ENCODE measurements at regions of chr6 and their contacts with region 1.

Region 1: DNA sequence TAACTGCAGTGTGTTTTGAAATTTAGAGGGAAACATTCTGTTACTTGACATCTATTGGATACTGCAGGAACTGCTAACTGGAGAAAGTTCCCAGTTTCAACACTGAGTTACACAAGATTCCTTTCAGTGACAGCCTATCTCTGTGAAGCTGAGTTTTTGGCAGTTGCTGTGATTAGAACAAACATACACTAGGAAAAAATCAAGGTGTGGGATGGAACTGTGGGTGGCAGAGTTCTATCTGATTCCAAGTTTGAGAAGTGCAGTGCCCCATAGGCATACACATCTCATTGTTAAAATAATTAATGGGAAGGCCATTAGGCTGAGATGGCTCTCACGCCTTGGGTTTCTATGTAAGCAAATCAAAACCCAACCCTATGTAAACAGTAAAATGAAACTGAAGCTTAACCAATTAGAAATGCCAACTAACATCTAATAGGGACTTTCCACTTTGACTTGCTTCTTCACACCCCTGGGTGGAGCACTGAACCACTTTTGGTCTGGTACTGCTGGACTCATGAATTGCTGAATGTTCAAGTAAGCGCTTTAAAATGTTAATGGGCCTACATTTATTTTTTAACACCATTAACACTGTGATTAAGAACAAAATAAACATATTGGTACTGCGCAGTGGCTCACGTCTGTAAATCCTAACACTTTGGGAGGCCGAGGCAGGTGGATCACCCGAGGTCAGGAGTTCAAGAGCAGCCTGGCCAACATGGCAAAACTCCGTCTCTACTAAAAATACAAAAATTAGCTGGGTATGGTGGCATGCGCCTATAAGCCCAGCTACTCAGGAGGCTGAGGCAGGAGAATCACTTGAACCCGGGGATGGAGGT is 55.2 kb upstream of the TBC1D7 start:
- DNase-seq: peak; percentile 55
- H3K4me3 Mint-ChIP-seq: peak overlapping the region; percentile 32
- H3K27ac Mint-ChIP-seq: peak overlapping the region; percentile 59
- H3K4me1 Mint-ChIP-seq: peaks cover 10% of the 10 kb centered on the region
- H3K27me3 Mint-ChIP-seq: no peaks in the 10 kb centered on the region
- CTCF ChIP-seq: peak; percentile 23

Region 2: GRCh38 chr6:13336553-13336952 is 47.0 kb before region 1 on chr6:
- CTCF ChIA-PET with region 1: interaction called, 3 read pairs
- POLR2A ChIA-PET with region 1: interaction called, 3 read pairs
- intact Hi-C with region 1: loop called (anchors 2 kb)
- DNase-seq: peak; percentile 81
- H3K4me3 Mint-ChIP-seq: no peak overlapping the region
- H3K27ac Mint-ChIP-seq: no peak overlapping the region
- H3K4me1 Mint-ChIP-seq: peaks cover 5% of the 10 kb centered on the region
- H3K27me3 Mint-ChIP-seq: no peaks in the 10 kb centered on the region
- CTCF ChIP-seq: peak; percentile 90

Region 3: GRCh38 chr6:13591205-13591921 is 207.8 kb after region 1 on chr6:
- CTCF ChIA-PET with region 1: no interaction called
- POLR2A ChIA-PET with region 1: no interaction called
- intact Hi-C with region 1: no loop called
- DNase-seq: no peak
- H3K4me3 Mint-ChIP-seq: no peak overlapping the region
- H3K27ac Mint-ChIP-seq: no peak overlapping the region
- H3K4me1 Mint-ChIP-seq: no peaks in the 10 kb centered on the region
- H3K27me3 Mint-ChIP-seq: no peaks in the 10 kb centered on the region
- CTCF ChIP-seq: no peak

Region 4: GRCh38 chr6:14046476-14047068 is 663.0 kb after region 1 on chr6:
- CTCF ChIA-PET with region 1: no interaction called
- POLR2A ChIA-PET with region 1: no interaction called
- intact Hi-C with region 1: no loop called
- DNase-seq: peak; percentile 62
- H3K4me3 Mint-ChIP-seq: no peak overlapping the region
- H3K27ac Mint-ChIP-seq: no peak overlapping the region
- H3K4me1 Mint-ChIP-seq: no peaks in the 10 kb centered on the region
- H3K27me3 Mint-ChIP-seq: peaks cover 32% of the 10 kb centered on the region
- CTCF ChIP-seq: peak; percentile 67